ENCODE measurements at regions of chr17 and their contacts with region 1.

Region 1: GRCh38 chr17:60435244-60436167 is 13.2 kb downstream of the CHCT1 start:
- DNase-seq: peak in 1 of 2 donors; percentile 86
- H3K4me3 ChIP-seq: peak overlapping the region in 1 of 2 donors; percentile 40
- H3K27ac ChIP-seq: peak overlapping the region; percentile 31 to 51
- H3K4me1 ChIP-seq: peaks cover 0 to 4% of the 10 kb centered on the region in 2 donors
- H3K27me3 ChIP-seq: no peaks in the 10 kb centered on the region
- CTCF ChIP-seq: peak; percentile 82 to 91 (median 87)

Region 2: GRCh38 chr17:60102632-60103096 is 332.8 kb before region 1 on chr17:
- intact Hi-C with region 1: loop called (anchors 10 kb)
- DNase-seq: no peak
- H3K4me3 ChIP-seq: peak overlapping the region; percentile 30 to 40
- H3K27ac ChIP-seq: no peak overlapping the region
- H3K4me1 ChIP-seq: no peaks in the 10 kb centered on the region
- H3K27me3 ChIP-seq: no peaks in the 10 kb centered on the region
- CTCF ChIP-seq: no peak

Region 3: DNA sequence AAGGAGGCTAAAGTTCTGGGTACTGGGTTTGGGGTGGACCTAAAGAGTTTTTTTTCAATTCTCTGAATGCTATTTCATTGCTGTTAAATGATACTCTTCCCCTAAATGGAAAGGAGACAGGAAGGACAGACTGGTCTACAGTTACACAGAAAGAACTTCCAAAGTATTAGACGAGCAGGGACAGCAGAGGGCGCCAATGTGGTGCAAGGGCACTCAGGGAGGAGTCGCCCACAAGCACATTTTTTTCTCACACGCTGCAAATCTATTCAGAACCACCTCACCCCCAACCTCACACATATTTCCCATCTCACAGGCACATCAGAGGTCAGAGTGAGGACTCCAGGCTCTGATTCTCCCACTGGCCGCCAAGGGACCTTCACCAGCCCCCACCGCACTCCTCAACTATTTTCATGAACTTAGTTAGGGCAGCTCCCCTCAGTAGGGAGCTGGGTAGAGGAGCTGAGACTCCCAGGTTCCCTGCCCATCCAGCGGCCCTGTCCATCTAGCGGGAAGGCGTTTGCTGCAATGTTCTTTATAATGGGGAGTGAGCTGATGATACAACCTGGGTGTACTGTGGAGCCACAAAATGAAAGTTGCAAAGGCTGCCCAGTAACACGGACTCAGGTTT is 292.5 kb before region 1 on chr17:
- intact Hi-C with region 1: loop called (anchors 10 kb)
- DNase-seq: peak in 1 of 2 donors; percentile 88
- H3K4me3 ChIP-seq: no peak overlapping the region
- H3K27ac ChIP-seq: no peak overlapping the region
- H3K4me1 ChIP-seq: peaks cover 0 to 15% of the 10 kb centered on the region in 2 donors
- H3K27me3 ChIP-seq: peaks cover 23% of the 10 kb centered on the region
- CTCF ChIP-seq: peak; percentile 22 to 57 (median 56)

Region 4: DNA sequence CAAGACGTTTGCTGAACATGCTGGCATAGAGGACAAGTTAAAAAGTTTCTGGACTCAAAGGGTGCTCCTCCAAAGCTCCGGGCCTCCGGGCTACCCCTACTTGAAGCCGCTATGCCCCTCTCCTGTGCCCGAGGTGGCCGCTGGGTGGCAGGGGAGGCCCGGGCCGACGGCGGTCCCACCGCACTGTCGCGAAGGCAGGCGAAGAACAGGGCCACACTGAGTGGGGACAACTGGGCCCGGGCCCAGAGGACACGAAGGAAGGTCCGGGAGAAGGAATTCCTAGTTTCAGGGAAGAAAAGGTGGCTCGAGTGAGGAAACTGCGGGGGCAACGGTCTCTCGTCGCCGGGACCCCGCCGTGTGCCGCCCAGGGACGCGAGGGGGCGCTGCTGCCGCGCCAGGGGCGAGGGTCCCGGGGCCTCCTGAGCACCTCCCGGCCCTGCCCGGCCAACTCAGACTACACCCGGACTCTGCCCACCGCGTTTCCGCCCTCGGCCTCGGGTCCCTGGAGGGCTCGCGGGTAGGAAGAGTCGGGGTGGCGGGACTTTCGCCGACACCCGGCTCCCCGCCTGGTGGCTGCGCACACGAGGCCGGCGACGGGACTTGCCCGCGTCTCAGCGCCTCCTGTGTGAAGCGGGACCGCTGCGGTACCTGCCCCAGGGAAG is 14.1 kb before region 1 on chr17:
- intact Hi-C with region 1: loop called (anchors 1 kb)
- DNase-seq: peak; percentile 27 to 83
- H3K4me3 ChIP-seq: peak overlapping the region; percentile 72 to 76
- H3K27ac ChIP-seq: no peak overlapping the region
- H3K4me1 ChIP-seq: no peaks in the 10 kb centered on the region
- H3K27me3 ChIP-seq: no peaks in the 10 kb centered on the region
- CTCF ChIP-seq: peak; percentile 90 to 98 (median 95)